OCI-LY7 (cell line): ENCODE measurements at regions of chr7 and their contacts with region 1.

Region 1: DNA sequence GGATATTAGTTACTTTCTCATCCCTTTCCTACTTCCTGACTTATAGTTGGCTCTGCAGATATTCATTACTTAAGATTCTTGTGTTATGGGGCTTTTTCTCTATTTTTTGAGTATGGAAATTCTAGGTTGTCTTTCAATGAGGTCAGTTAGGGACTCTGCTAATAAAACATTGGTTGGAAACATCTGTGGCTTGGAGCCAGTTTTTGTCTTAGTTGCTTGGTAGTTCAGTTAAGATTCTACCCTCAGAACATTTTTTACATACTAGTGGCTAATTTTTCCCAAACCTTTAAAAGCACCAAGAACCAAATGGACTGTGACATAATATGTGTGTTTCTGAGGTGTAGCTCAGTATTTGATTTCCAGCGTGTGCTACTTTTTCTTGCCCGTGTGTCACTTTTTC is 305.6 kb upstream of the FZD1 start:
- DNase-seq: no peak
- H3K4me3 ChIP-seq: no peak overlapping the region
- H3K27ac ChIP-seq: no peak overlapping the region
- H3K4me1 ChIP-seq: no peaks in the 10 kb centered on the region
- CTCF ChIP-seq: no peak

Region 2: DNA sequence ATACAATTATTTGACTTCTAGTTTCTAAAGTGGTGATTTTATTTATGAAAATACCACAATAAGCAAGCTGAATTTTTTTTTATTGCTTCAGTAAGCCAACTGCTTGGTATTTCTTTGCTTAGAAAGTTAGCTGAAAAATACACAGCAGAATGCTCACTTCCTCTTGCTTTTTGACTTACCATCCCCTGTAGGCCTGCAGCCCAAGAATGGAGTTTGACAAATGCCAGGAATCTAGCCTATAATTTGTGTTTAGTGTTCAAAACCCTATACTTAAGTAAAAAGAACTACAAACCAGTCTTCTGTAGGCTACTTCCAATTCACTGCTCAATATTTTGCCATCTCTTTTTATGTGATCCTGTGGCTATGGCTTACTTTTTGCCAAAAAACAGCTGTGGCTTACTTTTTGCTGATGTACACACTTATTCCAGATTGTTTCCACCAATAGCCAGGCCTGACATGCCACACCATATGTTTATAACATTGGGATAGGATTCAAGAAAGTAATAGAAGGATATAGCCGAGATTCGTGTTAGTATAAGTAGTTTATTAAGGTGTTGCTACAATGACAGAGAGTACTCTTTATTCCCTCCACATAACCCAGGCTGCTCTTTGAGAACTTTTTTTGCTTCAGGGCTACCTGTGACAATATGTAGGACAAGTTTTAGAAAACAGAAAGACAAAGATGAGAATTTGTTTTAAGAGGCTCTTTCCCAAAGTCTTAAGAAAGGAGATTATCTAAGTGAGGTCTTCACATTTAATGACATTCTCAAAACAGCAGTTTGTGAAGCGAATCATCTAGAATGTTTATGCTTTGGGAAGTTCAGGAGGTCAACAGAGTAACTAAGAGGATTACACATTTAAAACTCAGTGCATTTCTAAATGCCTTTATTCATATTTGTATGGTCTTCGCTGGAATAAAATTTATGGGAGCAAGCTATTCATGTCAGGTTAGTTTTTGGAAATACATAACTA is 41.6 kb after region 1 on chr7:
- CTCF ChIA-PET with region 1: no interaction called
- POLR2A ChIA-PET with region 1: no interaction called
- intact Hi-C with region 1: loop called (anchors 1 kb)
- DNase-seq: no peak
- H3K4me3 ChIP-seq: no peak overlapping the region
- H3K27ac ChIP-seq: no peak overlapping the region
- H3K4me1 ChIP-seq: no peaks in the 10 kb centered on the region
- CTCF ChIP-seq: no peak